ENCODE measurements at regions of chr15 and their contacts with region 1.

Region 1: DNA sequence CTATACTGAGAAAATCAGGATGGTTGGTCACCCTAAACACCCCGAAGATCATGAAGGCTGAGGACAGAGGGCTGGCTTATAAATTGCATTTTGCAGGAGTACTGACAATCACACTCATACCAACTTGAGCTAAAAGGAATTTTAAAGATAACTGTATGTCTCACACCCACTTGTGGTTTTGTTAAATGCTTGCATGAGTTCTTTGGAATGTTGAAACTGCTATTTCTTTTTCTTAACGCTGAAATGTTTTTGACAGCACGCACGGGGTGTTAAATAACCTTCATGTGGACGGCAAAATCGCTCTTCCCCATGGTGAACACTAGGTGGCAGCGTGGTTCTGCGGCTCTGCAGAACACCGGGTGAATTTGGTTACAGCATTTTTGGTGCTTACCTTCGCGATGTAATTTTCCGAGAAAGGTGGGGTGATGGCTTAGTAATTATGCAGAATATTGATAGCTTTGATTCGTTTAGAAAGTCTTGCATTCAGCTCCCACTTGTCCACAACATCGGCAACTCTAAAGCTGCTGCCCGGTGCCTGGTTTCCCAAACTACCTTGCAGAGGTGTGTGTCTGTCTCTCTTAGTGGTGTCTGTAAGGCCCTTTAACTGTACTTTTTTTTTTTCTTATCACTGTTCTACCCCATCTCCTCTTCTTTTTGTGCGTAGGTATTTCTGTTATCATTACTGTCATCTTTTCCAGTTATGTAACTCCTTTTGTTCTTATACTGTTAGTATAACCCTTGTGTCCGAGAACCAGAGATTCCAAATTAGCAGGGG is 51.7 kb downstream of the ARNT2 start:
- DNase-seq: peak; percentile 44
- ATAC-seq: peak; percentile 89
- H3K4me3 ChIP-seq: no peak overlapping the region
- H3K27ac ChIP-seq: no peak overlapping the region
- H3K4me1 ChIP-seq: peaks cover 4 to 8% of the 10 kb centered on the region in 2 experiments; a peak in 3 of 4 replicates
- H3K27me3 ChIP-seq: no peaks in the 10 kb centered on the region
- CTCF ChIP-seq: peak; percentile 88 to 95 (median 89)
- POLR2A ChIP-seq: no peak
- RAD21 ChIP-seq: peak; percentile 94

Region 2: GRCh38 chr15:80404057-80404715 is 51.7 kb before region 1 on chr15 and contains the start of gene ARNT2:
- CTCF ChIA-PET with region 1: no interaction called
- POLR2A ChIA-PET with region 1: no interaction called
- RAD21 ChIA-PET with region 1: no interaction called
- intact Hi-C with region 1: no loop called
- DNase-seq: no peak
- ATAC-seq: peak; percentile 67
- H3K4me3 ChIP-seq: peak within 1 kb of the TSS; percentile 43 to 54
- H3K27ac ChIP-seq: peak within 1 kb of the TSS; percentile 32; the same call in 1 of the 2 replicates
- H3K4me1 ChIP-seq: peaks cover 0 to 5% of the 10 kb centered on the region in 2 experiments; a peak in 1 of 4 replicates
- H3K27me3 ChIP-seq: 0 out of 2 replicates have a peak, but pooled peaks cover 3% of the 10 kb centered on the region
- CTCF ChIP-seq: no peak
- POLR2A ChIP-seq: no peak
- RAD21 ChIP-seq: no peak
- total RNA-seq, gene ARNT2: 3.0 TPM

Region 3: DNA sequence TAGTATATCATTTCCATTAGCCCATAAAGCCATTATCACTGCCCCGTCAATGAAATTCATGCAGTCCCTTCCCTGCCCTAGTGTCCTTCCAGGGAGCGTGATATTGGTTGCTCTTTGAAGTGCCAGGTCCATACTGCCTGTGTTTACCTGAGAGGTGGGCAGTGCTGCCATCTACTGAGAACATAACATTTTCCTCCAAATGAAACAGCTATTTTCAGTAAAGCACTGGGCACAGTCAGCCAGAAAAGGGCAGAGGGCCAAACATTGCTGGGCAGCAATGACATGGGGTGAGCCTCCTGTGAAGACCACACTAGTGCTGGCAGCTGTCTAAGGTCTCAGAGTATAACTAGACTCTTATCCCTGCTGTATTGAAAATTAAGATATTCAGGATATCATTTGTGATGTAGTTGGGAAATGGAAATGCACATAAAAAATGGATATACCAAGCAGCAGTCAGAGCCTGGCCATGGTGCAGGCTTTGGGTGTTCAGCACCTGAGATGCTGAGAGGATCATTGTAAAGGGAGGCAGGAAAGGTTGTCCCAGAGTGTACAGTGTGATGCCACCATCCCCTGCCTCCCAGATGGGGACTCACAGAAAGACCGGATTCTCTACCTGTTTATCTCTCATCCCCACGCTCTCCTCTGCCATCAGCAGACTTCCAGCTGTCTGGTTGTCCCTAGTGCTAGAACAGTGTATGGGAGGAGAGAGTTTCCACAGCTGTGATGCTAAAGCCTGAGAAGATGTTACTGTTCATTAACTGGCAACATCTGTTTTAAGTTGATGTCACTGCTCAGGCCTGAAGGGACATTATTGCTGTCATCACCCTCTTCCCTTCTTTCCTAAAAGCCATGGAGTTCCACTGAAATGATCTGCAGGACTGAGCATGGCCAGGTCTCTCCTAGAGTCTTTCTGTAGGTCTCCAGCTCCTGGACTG is 57.1 kb after region 1 on chr15:
- CTCF ChIA-PET with region 1: no interaction called
- POLR2A ChIA-PET with region 1: no interaction called
- RAD21 ChIA-PET with region 1: no interaction called
- intact Hi-C with region 1: loop called (anchors 5 kb)
- DNase-seq: peak; percentile 6
- ATAC-seq: peak; percentile 83
- H3K4me3 ChIP-seq: no peak overlapping the region
- H3K27ac ChIP-seq: no peak overlapping the region
- H3K4me1 ChIP-seq: no peaks in the 10 kb centered on the region
- H3K27me3 ChIP-seq: no peaks in the 10 kb centered on the region
- CTCF ChIP-seq: peak; percentile 20 to 38 (median 35); a peak in 3 of 6 replicates
- POLR2A ChIP-seq: no peak
- RAD21 ChIP-seq: peak; percentile 53

Region 4: DNA sequence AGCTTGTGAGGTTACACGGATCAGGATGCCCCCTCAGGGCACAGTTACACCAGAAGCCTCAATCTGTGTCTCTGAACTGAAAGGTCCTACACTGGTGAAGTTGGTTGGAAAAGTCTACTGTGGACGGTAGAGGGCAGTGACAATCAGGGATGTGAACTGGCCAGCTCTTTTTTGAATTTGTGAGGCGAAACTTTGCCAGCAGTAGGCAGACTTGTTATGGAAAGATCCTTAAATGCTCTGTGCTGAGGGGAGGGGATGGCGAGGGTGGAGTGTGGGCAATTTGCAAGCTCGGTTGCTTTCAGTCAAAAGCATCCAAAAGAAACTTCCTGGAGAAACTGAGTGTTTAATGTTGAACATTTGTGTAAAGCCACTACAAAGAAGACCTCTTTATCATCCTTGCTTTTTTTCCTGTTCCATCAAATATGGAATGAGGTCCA is 111.9 kb after region 1 on chr15:
- CTCF ChIA-PET with region 1: no interaction called
- POLR2A ChIA-PET with region 1: no interaction called
- RAD21 ChIA-PET with region 1: no interaction called
- intact Hi-C with region 1: loop called (anchors 2 kb)
- DNase-seq: peak; percentile 72
- ATAC-seq: peak; percentile 97
- H3K4me3 ChIP-seq: no peak overlapping the region
- H3K27ac ChIP-seq: no peak overlapping the region
- H3K4me1 ChIP-seq: no peaks in the 10 kb centered on the region
- H3K27me3 ChIP-seq: no peaks in the 10 kb centered on the region
- CTCF ChIP-seq: peak; percentile 75 to 99 (median 88)
- POLR2A ChIP-seq: no peak
- RAD21 ChIP-seq: peak; percentile 96